ENCODE measurements at regions of chr5 and their contacts with region 1.

Region 1: GRCh38 chr5:86880785-86881492 is 263.2 kb downstream of the COX7C start:
- DNase-seq: peak in 1 of 2 donors; percentile 44
- ATAC-seq: peak in 7 of 8 donors; percentile 78 to 95 (median 88)
- H3K4me3 ChIP-seq: no peak overlapping the region
- H3K27ac ChIP-seq: no peak overlapping the region
- H3K4me1 ChIP-seq: peaks cover 0 to 15% (median 0%) of the 10 kb centered on the region in 9 donors
- H3K27me3 ChIP-seq: no peaks in the 10 kb centered on the region
- CTCF ChIP-seq: peak in 8 of 9 donors; percentile 35 to 76 (median 66)

Region 2: GRCh38 chr5:86968301-86968753 is 87.4 kb after region 1 on chr5:
- intact Hi-C with region 1: loop called in 8 of 10 experiments (anchors 1 to 10 kb)
- DNase-seq: peak; percentile 13 to 26
- ATAC-seq: peak in 7 of 8 donors; percentile 28 to 83 (median 57)
- H3K4me3 ChIP-seq: no peak overlapping the region
- H3K27ac ChIP-seq: peak overlapping the region in 5 of 10 donors; percentile 17 to 56 (median 38)
- H3K4me1 ChIP-seq: peaks cover 0 to 9% (median 0%) of the 10 kb centered on the region in 9 donors
- H3K27me3 ChIP-seq: peaks cover 0 to 3% (median 0%) of the 10 kb centered on the region in 7 donors
- CTCF ChIP-seq: peak in 7 of 9 donors; percentile 18 to 64 (median 52)

Region 3: GRCh38 chr5:87008751-87009560 is 128.0 kb after region 1 on chr5:
- intact Hi-C with region 1: loop called in 5 of 10 experiments (anchors 5 to 10 kb)
- DNase-seq: no peak
- ATAC-seq: peak in 2 of 8 donors; percentile 8 to 19
- H3K4me3 ChIP-seq: no peak overlapping the region
- H3K27ac ChIP-seq: no peak overlapping the region
- H3K4me1 ChIP-seq: peaks cover 0 to 6% (median 0%) of the 10 kb centered on the region in 9 donors
- H3K27me3 ChIP-seq: peaks cover 0 to 3% (median 0%) of the 10 kb centered on the region in 7 donors
- CTCF ChIP-seq: no peak

Region 4: GRCh38 chr5:87015901-87016300 is 135.0 kb after region 1 on chr5:
- intact Hi-C with region 1: loop called in 4 of 10 experiments (anchors 5 to 10 kb)
- DNase-seq: no peak
- ATAC-seq: no peak
- H3K4me3 ChIP-seq: no peak overlapping the region
- H3K27ac ChIP-seq: peak overlapping the region in 1 of 10 donors; percentile 77
- H3K4me1 ChIP-seq: peaks cover 0 to 28% (median 11%) of the 10 kb centered on the region in 9 donors
- H3K27me3 ChIP-seq: no peaks in the 10 kb centered on the region
- CTCF ChIP-seq: no peak

Region 5: DNA sequence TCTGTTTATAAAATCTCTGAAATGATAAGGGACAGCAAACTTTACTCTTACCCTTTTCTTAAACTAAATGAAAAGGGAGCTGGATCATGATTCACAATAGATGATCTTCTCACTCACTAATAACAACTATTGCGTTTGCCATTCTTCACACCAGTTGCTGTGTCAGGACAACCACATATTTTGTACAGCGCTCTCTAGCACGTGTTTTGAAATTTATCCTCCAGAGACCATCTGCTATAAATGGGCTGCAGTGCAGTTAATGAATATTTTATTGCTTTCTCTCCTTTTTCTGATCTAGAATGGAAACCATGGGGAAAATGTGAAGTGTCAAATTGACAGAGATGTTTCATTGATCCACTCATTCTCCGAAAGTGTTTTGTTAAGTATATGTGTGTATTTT is 790.2 kb after region 1 on chr5:
- intact Hi-C with region 1: no loop called
- DNase-seq: no peak
- ATAC-seq: no peak
- H3K4me3 ChIP-seq: no peak overlapping the region
- H3K27ac ChIP-seq: no peak overlapping the region
- H3K4me1 ChIP-seq: no peaks in the 10 kb centered on the region
- H3K27me3 ChIP-seq: no peaks in the 10 kb centered on the region
- CTCF ChIP-seq: no peak

Measured in heart right ventricle (tissue), 16 donors.